Breast epithelium (tissue), 4 donors: ENCODE measurements at regions of chr4 and their contacts with region 1.

Region 1: DNA sequence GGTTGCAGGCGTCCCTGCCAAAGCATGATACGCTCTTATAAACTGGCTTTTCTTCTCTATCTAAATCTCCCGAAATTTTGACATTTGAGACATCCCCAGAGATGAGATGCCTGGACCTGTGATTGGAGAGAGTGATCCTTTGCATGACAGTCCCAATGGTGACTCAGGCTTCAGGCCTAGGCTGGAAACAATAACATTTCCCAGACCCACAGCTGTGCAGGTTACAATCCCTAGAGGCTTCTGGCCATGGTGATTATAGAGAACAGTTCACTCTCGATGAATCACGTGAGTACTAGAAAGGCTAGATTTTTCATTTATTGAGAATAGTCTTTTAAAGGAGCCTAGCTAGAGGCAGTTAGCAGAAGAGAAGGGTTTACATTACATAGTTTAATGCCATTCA is 75.9 kb downstream of the SPATA18 start:
- DNase-seq: no peak
- H3K4me3 ChIP-seq: no peak overlapping the region
- H3K27ac ChIP-seq: no peak overlapping the region
- H3K4me1 ChIP-seq: no peaks in the 10 kb centered on the region
- H3K27me3 ChIP-seq: no peaks in the 10 kb centered on the region
- CTCF ChIP-seq: no peak
- POLR2A ChIP-seq: no peak

Region 2: DNA sequence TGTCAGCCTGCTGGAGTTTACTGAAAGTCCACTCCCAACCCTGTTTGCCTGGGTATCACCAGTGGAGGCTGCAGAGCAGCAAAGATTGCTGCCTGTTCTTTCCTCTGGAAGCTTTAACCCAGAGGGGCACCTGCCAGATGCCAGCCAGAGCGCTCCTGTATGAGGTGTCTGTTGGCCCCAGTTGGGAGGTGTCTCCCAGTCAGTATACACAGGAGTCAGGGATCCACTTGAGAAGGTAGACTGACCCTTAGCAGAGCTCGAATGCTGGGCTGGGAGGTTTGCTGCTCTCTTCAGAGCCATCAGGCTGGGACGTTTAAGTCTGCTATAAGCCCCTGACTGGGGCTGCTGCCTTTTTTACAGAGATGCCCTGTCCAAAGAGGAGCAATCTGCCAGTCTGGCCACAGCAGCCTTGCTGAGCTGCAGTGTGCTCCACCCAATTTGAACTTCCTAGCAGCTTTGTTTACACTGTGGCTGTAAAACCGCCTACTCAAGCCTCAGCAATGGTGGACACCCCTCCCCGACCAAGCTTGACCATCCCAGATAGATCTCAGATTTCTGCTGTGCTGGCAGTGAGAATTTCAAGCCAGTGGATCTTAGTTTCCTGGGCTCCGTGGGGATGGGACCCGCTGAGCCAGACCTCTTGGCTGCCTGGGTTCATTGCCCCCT is 35.3 kb before region 1 on chr4:
- intact Hi-C with region 1: loop called (anchors 2 kb)
- DNase-seq: no peak
- H3K4me3 ChIP-seq: no peak overlapping the region
- H3K27ac ChIP-seq: no peak overlapping the region
- H3K4me1 ChIP-seq: no peaks in the 10 kb centered on the region
- H3K27me3 ChIP-seq: no peaks in the 10 kb centered on the region
- CTCF ChIP-seq: no peak
- POLR2A ChIP-seq: no peak

Region 3: GRCh38 chr4:53101191-53101581 is 974.2 kb after region 1 on chr4:
- intact Hi-C with region 1: no loop called
- DNase-seq: no peak
- H3K4me3 ChIP-seq: no peak overlapping the region
- H3K27ac ChIP-seq: no peak overlapping the region
- H3K4me1 ChIP-seq: no peaks in the 10 kb centered on the region
- H3K27me3 ChIP-seq: no peaks in the 10 kb centered on the region
- CTCF ChIP-seq: no peak
- POLR2A ChIP-seq: no peak